Heart left ventricle (tissue), 16 donors: ENCODE measurements at regions of chr6 and their contacts with region 1.

Region 1: DNA sequence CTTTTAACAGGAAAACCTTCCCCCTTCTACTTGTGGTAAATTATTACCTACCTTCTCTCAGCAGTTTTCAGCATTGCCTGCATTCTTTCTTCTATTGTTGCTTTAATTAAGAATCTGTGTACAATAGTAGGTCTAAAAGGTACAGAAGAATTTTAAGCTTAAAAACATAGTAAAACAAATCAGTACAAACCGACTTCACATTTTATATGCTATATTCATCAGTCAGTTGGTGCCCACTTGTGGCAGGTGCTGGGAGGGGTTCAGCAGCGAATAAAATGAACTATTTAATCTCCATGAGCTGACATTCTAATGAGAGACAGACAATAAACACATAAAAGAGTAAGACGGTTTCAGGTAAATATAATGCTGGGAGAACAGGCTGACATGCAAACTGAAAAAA is 73.4 kb upstream of the FBXO30 start:
- DNase-seq: peak in 2 of 5 donors; percentile 23 to 26
- ATAC-seq: peak in 2 of 4 donors; percentile 53 to 55
- H3K4me3 ChIP-seq: no peak overlapping the region
- H3K27ac ChIP-seq: peak overlapping the region in 1 of 12 donors; percentile 34
- H3K4me1 ChIP-seq: peaks cover 0 to 8% (median 0%) of the 10 kb centered on the region in 12 donors
- H3K27me3 ChIP-seq: no peaks in the 10 kb centered on the region
- CTCF ChIP-seq: peak in 11 of 12 donors; percentile 34 to 68 (median 54)
- POLR2A ChIP-seq: no peak

Region 2: GRCh38 chr6:145761584-145761983 is 126.4 kb before region 1 on chr6:
- intact Hi-C with region 1: loop called in 1 of 10 experiments (anchors 10 kb)
- DNase-seq: no peak
- ATAC-seq: no peak
- H3K4me3 ChIP-seq: no peak overlapping the region
- H3K27ac ChIP-seq: no peak overlapping the region
- H3K4me1 ChIP-seq: peaks cover 0 to 1% (median 0%) of the 10 kb centered on the region in 12 donors
- H3K27me3 ChIP-seq: no peaks in the 10 kb centered on the region
- CTCF ChIP-seq: peak in 4 of 12 donors; percentile 13 to 25 (median 17)
- POLR2A ChIP-seq: no peak

Region 3: DNA sequence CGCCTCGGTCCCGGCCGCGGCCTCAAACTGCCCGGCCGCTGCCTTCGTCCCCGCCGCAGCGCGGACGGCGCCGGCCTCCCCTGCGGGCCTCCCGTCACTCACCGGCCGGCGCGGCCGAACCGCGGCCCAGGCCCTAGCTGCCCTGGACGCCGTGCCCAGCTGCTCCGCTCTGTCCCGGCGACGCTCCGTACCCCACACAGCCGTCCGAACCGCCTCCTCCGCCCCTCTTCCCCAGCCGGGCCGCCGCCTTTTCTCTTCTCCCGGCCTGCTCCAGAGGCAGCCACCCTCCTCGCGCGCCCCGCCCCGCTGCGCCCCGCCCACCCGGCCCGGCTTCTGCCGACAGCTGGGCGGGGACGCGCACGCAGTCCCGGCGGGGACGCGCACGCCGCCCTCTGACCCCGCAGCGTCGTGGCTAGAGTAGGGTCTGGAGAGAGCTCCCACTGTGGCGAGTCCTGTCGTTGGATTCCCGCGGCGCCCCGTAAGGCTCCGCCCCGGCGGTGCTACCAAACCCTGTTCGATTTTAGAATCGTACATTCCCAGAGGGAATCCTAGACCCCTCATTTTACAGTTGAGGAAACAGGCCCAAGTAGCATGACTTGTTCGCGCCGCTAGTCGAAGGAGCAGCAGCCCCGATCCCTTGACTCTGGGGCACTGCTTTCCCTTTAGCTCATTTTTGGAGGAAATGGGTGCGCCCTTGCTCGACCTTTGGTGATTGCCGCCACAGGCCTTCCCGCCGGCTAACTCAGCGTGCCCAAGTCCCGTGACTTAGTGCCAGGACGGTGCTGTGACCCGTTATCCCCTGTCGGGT is 73.3 kb before region 1 on chr6 and contains the start of gene FBXO30:
- intact Hi-C with region 1: no loop called
- DNase-seq: peak; percentile 88 to 94 (median 90)
- ATAC-seq: peak; percentile 91 to 98 (median 97)
- H3K4me3 ChIP-seq: peak within 1 kb of the TSS; percentile 50 to 82 (median 72)
- H3K27ac ChIP-seq: peak within 1 kb of the TSS; percentile 87 to 97 (median 94)
- H3K4me1 ChIP-seq: peaks cover 0 to 58% (median 40%) of the 10 kb centered on the region in 12 donors
- H3K27me3 ChIP-seq: no peaks in the 10 kb centered on the region
- CTCF ChIP-seq: peak in 3 of 12 donors; percentile 7 to 26 (median 9)
- POLR2A ChIP-seq: peak; percentile 26 to 91
- total RNA-seq, gene FBXO30: 9.0 to 17.1 (median 14.4) TPM